CD14-positive monocyte (primary cell): ENCODE measurements at regions of chr6 and their contacts with region 1.

Region 1: DNA sequence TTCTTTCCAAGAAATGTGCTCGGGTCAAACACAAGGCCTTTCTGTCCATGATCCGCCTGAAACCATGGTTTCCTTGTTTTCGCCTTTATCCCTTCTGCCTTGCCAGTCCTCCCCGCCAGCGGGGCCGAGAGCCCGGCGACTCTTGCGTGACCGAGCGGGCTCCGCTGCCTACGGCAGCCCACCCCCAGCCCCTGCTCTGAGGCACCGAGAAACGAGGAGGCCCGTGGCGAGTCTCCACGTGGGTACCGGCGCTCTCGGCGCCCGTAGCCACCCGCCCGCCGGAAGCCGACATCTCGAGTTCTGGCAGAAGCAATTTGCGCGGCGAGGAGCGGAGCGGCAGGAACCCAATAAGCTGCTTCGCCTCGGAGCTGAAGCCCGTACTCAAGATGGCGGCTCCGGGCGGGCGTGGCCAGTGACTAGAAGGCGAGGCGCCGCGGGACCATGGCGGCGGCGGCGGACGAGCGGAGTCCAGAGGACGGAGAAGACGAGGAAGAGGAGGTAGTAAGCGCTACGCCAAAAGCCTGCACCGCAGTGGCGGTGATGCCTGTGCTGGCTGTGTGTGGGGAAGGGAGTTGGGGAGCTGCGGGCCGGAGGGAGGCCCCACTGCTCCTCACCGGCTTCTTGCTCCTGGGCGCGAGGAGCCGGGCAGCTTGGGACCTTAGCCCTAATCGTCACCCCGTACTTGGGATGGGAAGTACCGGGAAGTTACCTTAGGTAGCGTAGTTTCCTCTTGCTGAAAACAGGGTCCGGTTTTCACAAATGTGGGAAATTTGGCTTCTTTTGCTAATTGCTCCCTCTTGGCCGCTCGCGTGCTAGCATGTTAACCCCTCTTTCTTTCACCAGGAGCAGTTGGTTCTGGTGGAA is at the start of gene GTF3C6:
- DNase-seq: peak; percentile 92 to 94 (median 94)
- H3K4me3 ChIP-seq: peak within 1 kb of the TSS; percentile 87 to 99 (median 91)
- H3K4me3 Mint-ChIP-seq: peak within 1 kb of the TSS; percentile 92 to 97
- H3K27ac ChIP-seq: peak within 1 kb of the TSS; percentile 97
- H3K27ac Mint-ChIP-seq: peak within 1 kb of the TSS; percentile 92 to 97 (median 95)
- H3K4me1 ChIP-seq: peaks cover 10% of the 10 kb centered on the region in 2 donors
- H3K4me1 Mint-ChIP-seq: peaks cover 16% of the 10 kb centered on the region
- H3K27me3 ChIP-seq: no peaks in the 10 kb centered on the region
- H3K27me3 Mint-ChIP-seq: peaks cover 0 to 2% (median 0%) of the 10 kb centered on the region in 3 donors
- CTCF ChIP-seq: no peak
- polyA plus RNA-seq, gene GTF3C6: 15.1 to 93.9 (median 91.1) TPM

Region 2: GRCh38 chr6:110815217-110816109 is 143.1 kb before region 1 on chr6 and contains the start of gene CDK19:
- intact Hi-C with region 1: loop called in 1 of 2 experiments (anchors 5 kb)
- DNase-seq: peak; percentile 98
- H3K4me3 ChIP-seq: peak within 1 kb of the TSS; percentile 79 to 94 (median 88)
- H3K4me3 Mint-ChIP-seq: peak within 1 kb of the TSS; percentile 98 to 100
- H3K27ac ChIP-seq: peak within 1 kb of the TSS; percentile 93 to 97
- H3K27ac Mint-ChIP-seq: peak within 1 kb of the TSS; percentile 98 to 100 (median 99)
- H3K4me1 ChIP-seq: peaks cover 25 to 38% of the 10 kb centered on the region in 2 donors
- H3K4me1 Mint-ChIP-seq: peaks cover 43% of the 10 kb centered on the region
- H3K27me3 ChIP-seq: no peaks in the 10 kb centered on the region
- H3K27me3 Mint-ChIP-seq: peaks cover 0 to 2% (median 0%) of the 10 kb centered on the region in 3 donors
- CTCF ChIP-seq: no peak
- polyA plus RNA-seq, gene CDK19: 2.7 to 12.0 (median 3.9) TPM

Region 3: GRCh38 chr6:110981202-110981600 is 22.6 kb after region 1 on chr6:
- intact Hi-C with region 1: loop called in 1 of 2 experiments (anchors 2 kb)
- DNase-seq: no peak
- H3K4me3 ChIP-seq: peak overlapping the region; percentile 87 to 97 (median 89)
- H3K4me3 Mint-ChIP-seq: peak overlapping the region; percentile 96
- H3K27ac ChIP-seq: peak overlapping the region; percentile 86 to 95
- H3K27ac Mint-ChIP-seq: peak overlapping the region; percentile 98 to 100 (median 99)
- H3K4me1 ChIP-seq: peaks cover 20 to 23% of the 10 kb centered on the region in 2 donors
- H3K4me1 Mint-ChIP-seq: peaks cover 21% of the 10 kb centered on the region
- H3K27me3 ChIP-seq: no peaks in the 10 kb centered on the region
- H3K27me3 Mint-ChIP-seq: peaks cover 0 to 2% (median 0%) of the 10 kb centered on the region in 3 donors
- CTCF ChIP-seq: no peak

Region 4: GRCh38 chr6:111011360-111012142 is 53.0 kb after region 1 on chr6:
- intact Hi-C with region 1: no loop called
- DNase-seq: peak; percentile 18 to 37 (median 29)
- H3K4me3 ChIP-seq: no peak overlapping the region
- H3K4me3 Mint-ChIP-seq: no peak overlapping the region
- H3K27ac ChIP-seq: peak overlapping the region in 1 of 2 donors; percentile 28
- H3K27ac Mint-ChIP-seq: peak overlapping the region in 6 of 7 donors; percentile 27 to 82 (median 72)
- H3K4me1 ChIP-seq: no peaks in the 10 kb centered on the region
- H3K4me1 Mint-ChIP-seq: peaks cover 3% of the 10 kb centered on the region
- H3K27me3 ChIP-seq: no peaks in the 10 kb centered on the region
- H3K27me3 Mint-ChIP-seq: peaks cover 0 to under 1% (median 0%) of the 10 kb centered on the region in 3 donors
- CTCF ChIP-seq: peak; percentile 73